Naive thymus-derived CD8-positive, alpha-beta T cell (primary cell): ENCODE measurements at regions of chr2 and their contacts with region 1.

Region 1: DNA sequence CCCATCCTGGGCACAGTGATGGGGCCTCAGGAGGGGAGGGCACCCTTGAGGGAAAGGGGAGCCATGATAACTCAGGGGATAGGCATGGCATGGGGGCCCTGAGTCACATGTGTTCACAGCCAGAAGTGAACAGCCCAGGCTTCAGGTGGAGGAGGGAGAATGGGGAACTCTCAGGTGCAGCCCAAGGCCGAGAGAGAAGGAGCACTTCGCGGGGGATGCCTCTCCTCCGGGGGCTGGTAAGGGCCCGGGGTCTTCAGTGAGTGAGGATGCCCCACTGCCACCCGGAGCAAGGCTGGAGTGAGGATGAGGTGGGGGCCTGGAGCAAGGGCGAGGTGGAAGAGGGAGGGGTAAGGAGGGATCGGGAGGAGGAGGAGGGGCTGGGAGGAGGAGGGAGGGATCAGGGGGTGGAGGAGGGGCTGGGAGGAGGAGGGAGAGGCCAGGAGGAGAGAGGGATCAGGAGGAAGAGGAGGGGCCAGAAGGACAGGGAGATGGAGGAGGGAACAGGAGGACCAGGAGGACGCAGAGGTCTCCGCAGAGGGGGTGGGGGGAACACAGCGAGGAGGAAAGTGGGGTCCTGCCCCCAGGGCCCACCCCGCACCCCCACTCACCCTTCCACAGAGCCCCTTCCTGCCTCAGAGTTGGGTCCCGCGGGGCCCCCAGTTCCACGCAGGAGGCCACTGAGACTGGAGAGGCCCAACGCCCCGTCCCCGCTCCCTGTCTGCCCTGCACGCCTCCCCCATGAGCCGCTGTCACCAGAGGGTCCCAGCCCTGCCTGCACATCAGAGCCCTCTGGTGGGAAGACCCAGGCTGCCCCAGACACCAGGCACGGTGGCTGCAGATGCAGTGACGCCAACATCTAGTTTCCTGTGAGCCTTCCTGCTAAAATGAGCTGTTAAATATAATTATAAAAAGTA is 42.8 kb downstream of the RAMP1 start:
- DNase-seq: peak in 2 of 10 donors; percentile 40 to 48
- ATAC-seq: peak in 1 of 2 donors; percentile 48
- H3K4me3 Mint-ChIP-seq: peak overlapping the region in 8 of 10 donors; percentile 33 to 89 (median 52)
- H3K27ac Mint-ChIP-seq: peak overlapping the region in 6 of 10 donors; percentile 37 to 95 (median 84)
- H3K4me1 Mint-ChIP-seq: peaks cover 32 to 63% (median 51%) of the 10 kb centered on the region in 4 donors
- H3K27me3 Mint-ChIP-seq: no peaks in the 10 kb centered on the region

Region 2: GRCh38 chr2:237886685-237887481 is 15.3 kb before region 1 on chr2:
- POLR2A ChIA-PET with region 1: no interaction called
- DNase-seq: no peak
- ATAC-seq: no peak
- H3K4me3 Mint-ChIP-seq: no peak overlapping the region
- H3K27ac Mint-ChIP-seq: no peak overlapping the region
- H3K4me1 Mint-ChIP-seq: peaks cover 0 to 3% (median 0%) of the 10 kb centered on the region in 4 donors
- H3K27me3 Mint-ChIP-seq: no peaks in the 10 kb centered on the region

Region 3: DNA sequence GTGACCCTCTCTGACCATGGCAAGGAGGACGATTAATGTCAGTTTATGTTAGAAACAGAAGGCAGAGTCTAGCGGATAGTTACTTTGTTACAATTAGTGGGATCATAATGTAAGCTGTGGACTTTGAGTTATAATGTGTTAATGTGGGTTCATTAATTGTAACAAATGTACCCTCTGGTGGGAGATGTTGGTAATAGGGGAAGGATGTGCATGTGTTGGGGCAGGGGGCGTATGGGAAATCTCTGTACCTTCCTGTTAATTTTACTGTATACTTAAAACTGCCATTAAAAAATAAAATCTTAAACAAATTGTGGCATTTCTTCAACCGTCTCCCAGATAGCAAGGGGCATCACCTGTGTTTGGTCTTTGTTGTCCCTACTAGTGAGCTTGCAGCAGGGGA is 69.5 kb after region 1 on chr2:
- POLR2A ChIA-PET with region 1: interaction called, 12 read pairs
- DNase-seq: no peak
- ATAC-seq: no peak
- H3K4me3 Mint-ChIP-seq: no peak overlapping the region
- H3K27ac Mint-ChIP-seq: no peak overlapping the region
- H3K4me1 Mint-ChIP-seq: peaks cover 32 to 58% (median 48%) of the 10 kb centered on the region in 4 donors
- H3K27me3 Mint-ChIP-seq: no peaks in the 10 kb centered on the region